ENCODE measurements at regions of chr11 and their contacts with region 1.

Region 1: GRCh38 chr11:128848815-128849455 is 18.2 kb downstream of the KCNJ1 start:
- DNase-seq: peak; percentile 57
- ATAC-seq: peak; percentile 73
- H3K4me3 Mint-ChIP-seq: no peak overlapping the region
- H3K27ac Mint-ChIP-seq: peak overlapping the region; percentile 60
- H3K4me1 Mint-ChIP-seq: peaks cover 58% of the 10 kb centered on the region
- H3K27me3 Mint-ChIP-seq: no peaks in the 10 kb centered on the region
- CTCF ChIP-seq: peak; percentile 29

Region 2: DNA sequence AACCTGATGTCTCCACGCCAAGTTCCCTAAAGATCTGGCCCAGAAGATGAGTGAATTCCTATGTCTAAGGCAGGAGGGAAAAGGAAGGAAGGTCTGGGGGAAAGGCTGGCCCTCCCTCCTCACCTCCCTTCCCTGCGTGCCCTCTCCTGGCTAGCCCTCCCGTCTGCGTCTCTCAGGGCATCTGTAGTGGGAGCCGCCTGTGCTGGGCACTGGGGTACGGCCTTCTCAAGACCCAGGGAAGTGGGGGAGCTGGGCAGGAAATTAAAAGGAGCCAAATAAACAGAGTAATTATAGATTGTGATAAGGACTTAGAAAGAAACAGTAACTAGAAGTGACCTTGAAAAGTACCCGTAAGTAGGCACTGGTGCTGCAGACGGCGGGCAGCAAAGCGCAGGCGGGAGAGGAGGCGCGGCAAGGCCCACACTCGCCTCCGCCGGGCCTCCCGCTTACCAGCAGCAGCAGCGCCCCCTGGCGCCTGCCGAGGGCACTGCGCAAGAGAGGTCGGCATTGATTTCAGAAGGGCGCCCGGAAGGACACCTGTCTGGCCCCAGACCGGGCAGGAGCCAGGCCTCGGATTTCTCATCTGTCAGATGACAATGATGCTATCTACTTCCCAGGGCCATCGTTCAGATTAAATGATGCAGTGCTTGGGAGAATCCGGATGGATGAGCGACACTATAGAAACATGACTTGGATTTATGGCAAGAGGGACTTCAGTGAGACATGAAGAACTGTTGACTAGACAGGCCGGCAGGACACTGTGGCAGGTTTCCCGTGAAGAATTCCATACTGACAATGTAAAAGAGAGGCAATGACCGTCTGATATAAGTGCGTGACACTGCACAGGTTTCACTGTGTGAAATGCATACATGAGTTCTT is 10.9 kb after region 1 on chr11:
- CTCF ChIA-PET with region 1: interaction called, 5 read pairs
- POLR2A ChIA-PET with region 1: no interaction called
- intact Hi-C with region 1: loop called (anchors 1 kb)
- DNase-seq: peak; percentile 77
- ATAC-seq: peak; percentile 98
- H3K4me3 Mint-ChIP-seq: no peak overlapping the region
- H3K27ac Mint-ChIP-seq: no peak overlapping the region
- H3K4me1 Mint-ChIP-seq: peaks cover 16% of the 10 kb centered on the region
- H3K27me3 Mint-ChIP-seq: no peaks in the 10 kb centered on the region
- CTCF ChIP-seq: peak; percentile 54

Measured in activated B cell treated with CpG ODN at 0.5 μM for 24 hours (primary cell).